Activated B cell treated with CpG ODN at 0.5 μM for 24 hours (primary cell): ENCODE measurements at regions of chr7 and their contacts with region 1.

Region 1: DNA sequence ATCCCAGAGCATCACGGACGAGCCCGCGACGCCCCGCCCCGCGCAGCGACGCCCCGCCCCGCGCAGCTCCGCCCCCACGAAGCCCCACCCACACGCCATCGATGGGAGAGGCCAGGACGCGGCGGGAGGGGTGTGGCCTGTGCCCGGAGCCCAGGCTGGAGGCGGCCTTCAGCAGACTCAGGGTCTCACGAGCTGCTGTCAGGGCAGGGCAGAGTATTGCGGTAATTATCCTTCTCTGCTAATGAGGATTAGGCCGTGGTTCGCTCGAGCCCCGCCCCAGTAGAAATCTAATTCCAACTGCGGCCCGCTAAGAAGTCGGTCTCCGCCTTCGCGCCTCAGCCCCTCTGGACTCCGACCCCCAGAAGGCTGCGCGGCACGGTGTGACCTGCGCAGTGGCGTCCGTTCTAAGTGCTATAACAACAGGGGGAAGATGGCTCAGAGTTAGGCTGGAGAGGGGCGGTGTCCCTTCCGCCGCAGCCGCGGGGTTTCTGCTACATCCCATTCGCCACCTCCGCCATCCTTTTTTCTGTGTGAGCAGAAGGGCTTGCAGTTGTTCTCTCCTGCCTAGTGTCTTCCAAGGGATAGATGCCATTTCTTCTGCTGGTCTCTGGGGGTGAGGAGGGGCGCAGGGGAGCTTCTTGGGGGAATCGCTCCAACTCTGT is 337 bp upstream of the NT5C3A start:
- DNase-seq: peak; percentile 91
- ATAC-seq: peak; percentile 93
- H3K4me3 Mint-ChIP-seq: peak overlapping the region; percentile 91
- H3K27ac Mint-ChIP-seq: peak overlapping the region; percentile 89
- H3K4me1 Mint-ChIP-seq: peaks cover 43% of the 10 kb centered on the region
- H3K27me3 Mint-ChIP-seq: no peaks in the 10 kb centered on the region
- CTCF ChIP-seq: no peak

Region 2: GRCh38 chr7:32072397-32072796 is 990.5 kb before region 1 on chr7:
- CTCF ChIA-PET with region 1: no interaction called
- POLR2A ChIA-PET with region 1: no interaction called
- intact Hi-C with region 1: no loop called
- DNase-seq: no peak
- ATAC-seq: no peak
- H3K4me3 Mint-ChIP-seq: no peak overlapping the region
- H3K27ac Mint-ChIP-seq: no peak overlapping the region
- H3K4me1 Mint-ChIP-seq: no peaks in the 10 kb centered on the region
- H3K27me3 Mint-ChIP-seq: peaks cover 30% of the 10 kb centered on the region
- CTCF ChIP-seq: no peak

Region 3: DNA sequence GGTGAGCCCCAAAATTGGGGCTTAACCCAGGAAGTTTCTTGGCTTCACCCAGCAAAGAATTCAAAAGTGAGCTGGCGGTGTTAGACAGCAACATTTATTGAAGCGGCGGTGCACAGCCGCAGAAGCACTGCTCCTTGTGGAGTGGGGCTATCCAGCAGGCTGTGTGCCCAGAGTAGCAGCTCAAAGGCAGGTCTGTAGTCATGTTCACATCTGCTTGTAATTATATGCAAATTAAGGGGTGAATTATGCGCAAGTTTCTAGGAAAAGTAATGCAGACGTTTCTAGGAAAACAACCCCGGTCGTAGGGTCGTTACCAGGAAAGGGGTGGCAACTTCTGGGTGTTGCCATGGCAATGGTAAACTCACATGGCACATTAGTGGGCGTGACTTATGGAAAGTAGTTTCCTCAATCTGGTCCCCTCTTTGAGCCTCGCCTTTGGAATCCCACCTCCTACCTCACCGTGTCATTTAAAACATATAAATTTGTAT is 157.7 kb before region 1 on chr7:
- CTCF ChIA-PET with region 1: no interaction called
- POLR2A ChIA-PET with region 1: no interaction called
- intact Hi-C with region 1: no loop called
- DNase-seq: no peak
- ATAC-seq: peak; percentile 85
- H3K4me3 Mint-ChIP-seq: peak overlapping the region; percentile 73
- H3K27ac Mint-ChIP-seq: peak overlapping the region; percentile 69
- H3K4me1 Mint-ChIP-seq: peaks cover 7% of the 10 kb centered on the region
- H3K27me3 Mint-ChIP-seq: no peaks in the 10 kb centered on the region
- CTCF ChIP-seq: no peak

Region 4: DNA sequence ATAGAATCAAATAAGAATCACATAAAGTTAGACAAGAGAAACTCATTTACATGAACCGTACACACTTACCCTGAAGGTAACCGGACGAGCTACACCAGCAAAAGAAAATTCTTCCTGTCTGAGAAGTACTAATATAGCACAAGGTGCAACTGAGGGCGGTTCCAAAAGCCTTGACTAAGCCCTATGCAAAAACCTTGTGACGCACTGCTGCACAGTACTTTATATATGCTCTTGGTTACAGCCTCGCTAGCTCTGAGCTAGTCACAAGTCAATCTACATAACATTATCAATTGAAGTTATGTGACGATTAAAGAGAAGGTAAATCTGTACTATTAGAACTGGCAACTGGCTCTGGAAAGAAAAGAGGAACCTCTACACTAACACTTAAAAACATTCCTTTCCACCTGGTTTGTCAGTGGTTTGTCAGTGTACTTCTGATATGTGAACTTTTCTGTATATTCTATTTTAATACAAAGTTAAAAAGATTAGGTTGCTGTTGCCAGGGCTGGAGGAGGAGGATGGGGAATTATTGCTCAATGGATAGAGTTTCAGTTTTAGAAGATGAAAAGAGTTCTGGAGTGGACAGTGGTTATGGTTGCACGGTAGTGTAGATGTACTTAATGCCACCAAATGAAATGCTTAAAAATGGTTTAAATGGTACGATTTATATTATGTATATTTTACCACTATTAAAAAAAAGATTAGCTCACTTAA is 22.0 kb before region 1 on chr7:
- CTCF ChIA-PET with region 1: no interaction called
- POLR2A ChIA-PET with region 1: interaction called, 36 read pairs
- intact Hi-C with region 1: loop called (anchors 1 kb)
- DNase-seq: no peak
- ATAC-seq: peak; percentile 98
- H3K4me3 Mint-ChIP-seq: peak overlapping the region; percentile 79
- H3K27ac Mint-ChIP-seq: peak overlapping the region; percentile 81
- H3K4me1 Mint-ChIP-seq: peaks cover 75% of the 10 kb centered on the region
- H3K27me3 Mint-ChIP-seq: no peaks in the 10 kb centered on the region
- CTCF ChIP-seq: no peak

Region 5: DNA sequence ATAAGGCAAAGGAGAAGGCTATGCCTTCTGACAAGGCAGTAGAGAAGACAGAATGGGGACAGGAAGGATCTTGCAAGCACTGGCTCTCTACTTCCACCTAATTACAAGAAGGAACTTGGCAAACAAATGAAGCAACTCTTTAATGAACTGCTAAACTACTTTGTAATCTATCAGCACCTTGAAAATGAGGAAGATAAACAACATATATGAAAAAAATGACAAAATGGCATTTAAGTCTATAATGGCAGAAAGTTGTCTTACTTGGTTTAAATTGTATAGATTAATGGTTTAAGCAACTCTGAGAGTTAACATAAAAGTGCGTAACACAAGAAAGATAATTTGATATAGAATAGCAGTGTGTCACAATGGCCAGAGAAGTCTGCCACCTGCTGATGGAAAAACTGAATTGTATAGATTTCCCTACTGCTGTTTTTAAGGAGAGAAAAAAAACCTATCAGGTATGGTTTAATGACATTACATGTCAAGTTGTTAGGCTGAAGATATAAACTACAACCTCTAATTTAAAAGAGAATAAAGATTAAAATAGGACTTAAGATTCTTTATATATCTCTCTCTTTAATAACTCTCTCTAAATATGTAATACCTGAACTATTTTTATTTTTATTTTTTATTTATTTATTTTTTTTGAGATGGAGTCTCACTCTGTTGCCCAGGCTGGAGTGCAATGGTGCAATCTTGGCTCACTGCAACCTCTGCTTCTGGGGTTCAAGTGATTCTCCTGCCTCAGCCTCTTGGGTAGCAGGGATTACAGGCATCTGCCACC is 12.2 kb before region 1 on chr7:
- CTCF ChIA-PET with region 1: interaction called, 7 read pairs
- POLR2A ChIA-PET with region 1: interaction called, 26 read pairs
- intact Hi-C with region 1: loop called (anchors 1 kb)
- DNase-seq: no peak
- ATAC-seq: peak; percentile 64
- H3K4me3 Mint-ChIP-seq: peak overlapping the region; percentile 9
- H3K27ac Mint-ChIP-seq: peak overlapping the region; percentile 56
- H3K4me1 Mint-ChIP-seq: peaks cover 66% of the 10 kb centered on the region
- H3K27me3 Mint-ChIP-seq: no peaks in the 10 kb centered on the region
- CTCF ChIP-seq: no peak

Region 6: GRCh38 chr7:33099154-33099940 is 36.4 kb after region 1 on chr7:
- CTCF ChIA-PET with region 1: no interaction called
- POLR2A ChIA-PET with region 1: interaction called, 24 read pairs
- intact Hi-C with region 1: loop called (anchors 1 kb)
- DNase-seq: no peak
- ATAC-seq: peak; percentile 83
- H3K4me3 Mint-ChIP-seq: peak overlapping the region; percentile 67
- H3K27ac Mint-ChIP-seq: peak overlapping the region; percentile 95
- H3K4me1 Mint-ChIP-seq: peaks cover 59% of the 10 kb centered on the region
- H3K27me3 Mint-ChIP-seq: no peaks in the 10 kb centered on the region
- CTCF ChIP-seq: no peak

Region 7: GRCh38 chr7:33128990-33129805 is 66.3 kb after region 1 on chr7 and contains the start of gene BBS9:
- CTCF ChIA-PET with region 1: no interaction called
- POLR2A ChIA-PET with region 1: no interaction called
- intact Hi-C with region 1: loop called (anchors 1 kb)
- DNase-seq: peak; percentile 90
- ATAC-seq: peak; percentile 92
- H3K4me3 Mint-ChIP-seq: peak within 1 kb of the TSS; percentile 94
- H3K27ac Mint-ChIP-seq: peak within 1 kb of the TSS; percentile 92
- H3K4me1 Mint-ChIP-seq: peaks cover 18% of the 10 kb centered on the region
- H3K27me3 Mint-ChIP-seq: no peaks in the 10 kb centered on the region
- CTCF ChIP-seq: no peak
- total RNA-seq, gene BBS9: 18.3 and 18.6 TPM in 2 replicates

Region 8: GRCh38 chr7:35037526-35038339 is 1974.8 kb after region 1 on chr7:
- CTCF ChIA-PET with region 1: no interaction called
- POLR2A ChIA-PET with region 1: no interaction called
- intact Hi-C with region 1: loop called (anchors 10 kb)
- DNase-seq: peak; percentile 96
- ATAC-seq: peak; percentile 83
- H3K4me3 Mint-ChIP-seq: peak overlapping the region; percentile 86
- H3K27ac Mint-ChIP-seq: peak overlapping the region; percentile 72
- H3K4me1 Mint-ChIP-seq: peaks cover 29% of the 10 kb centered on the region
- H3K27me3 Mint-ChIP-seq: peaks cover 4% of the 10 kb centered on the region
- CTCF ChIP-seq: no peak